ENCODE measurements at regions of chr20 and their contacts with region 1.

Region 1: GRCh38 chr20:48828022-48828743 is 384 bp upstream of the PREX1 start:
- DNase-seq: peak; percentile 74 to 78 (median 74)
- H3K4me3 ChIP-seq: peak overlapping the region; percentile 44 to 82 (median 76)
- H3K4me3 Mint-ChIP-seq: peak overlapping the region; percentile 82 to 92
- H3K27ac ChIP-seq: peak overlapping the region in 1 of 2 donors; percentile 72
- H3K27ac Mint-ChIP-seq: peak overlapping the region; percentile 68 to 94 (median 89)
- H3K4me1 ChIP-seq: peaks cover 60 to 74% of the 10 kb centered on the region in 2 donors
- H3K4me1 Mint-ChIP-seq: peaks cover 69% of the 10 kb centered on the region
- H3K27me3 ChIP-seq: no peaks in the 10 kb centered on the region
- H3K27me3 Mint-ChIP-seq: no peaks in the 10 kb centered on the region
- CTCF ChIP-seq: peak; percentile 7

Region 2: GRCh38 chr20:48722737-48723191 is 105.4 kb before region 1 on chr20:
- intact Hi-C with region 1: loop called in 1 of 2 experiments (anchors 10 kb)
- DNase-seq: peak; percentile 41 to 83 (median 68)
- H3K4me3 ChIP-seq: peak overlapping the region in 1 of 3 experiments; percentile 56
- H3K4me3 Mint-ChIP-seq: peak overlapping the region; percentile 53 to 80
- H3K27ac ChIP-seq: peak overlapping the region; percentile 91 to 98
- H3K27ac Mint-ChIP-seq: peak overlapping the region; percentile 96 to 99 (median 98)
- H3K4me1 ChIP-seq: peaks cover 79 to 88% of the 10 kb centered on the region in 2 donors
- H3K4me1 Mint-ChIP-seq: peaks cover 91% of the 10 kb centered on the region
- H3K27me3 ChIP-seq: no peaks in the 10 kb centered on the region
- H3K27me3 Mint-ChIP-seq: peaks cover 0 to 4% (median 2%) of the 10 kb centered on the region in 3 donors
- CTCF ChIP-seq: no peak

Region 3: GRCh38 chr20:48738399-48739304 is 89.5 kb before region 1 on chr20:
- intact Hi-C with region 1: no loop called
- DNase-seq: peak; percentile 47 to 76 (median 53)
- H3K4me3 ChIP-seq: no peak overlapping the region
- H3K4me3 Mint-ChIP-seq: peak overlapping the region; percentile 16 to 26
- H3K27ac ChIP-seq: peak overlapping the region; percentile 26 to 74
- H3K27ac Mint-ChIP-seq: peak overlapping the region; percentile 38 to 95 (median 71)
- H3K4me1 ChIP-seq: peaks cover 28 to 29% of the 10 kb centered on the region in 2 donors
- H3K4me1 Mint-ChIP-seq: peaks cover 48% of the 10 kb centered on the region
- H3K27me3 ChIP-seq: no peaks in the 10 kb centered on the region
- H3K27me3 Mint-ChIP-seq: peaks cover 0 to 2% (median 0%) of the 10 kb centered on the region in 3 donors
- CTCF ChIP-seq: no peak

Region 4: GRCh38 chr20:48787861-48788375 is 40.3 kb before region 1 on chr20:
- intact Hi-C with region 1: loop called (anchors 5 kb)
- DNase-seq: peak; percentile 71 to 90 (median 86)
- H3K4me3 ChIP-seq: peak overlapping the region in 1 of 3 experiments; percentile 64
- H3K4me3 Mint-ChIP-seq: peak overlapping the region; percentile 45 to 81
- H3K27ac ChIP-seq: peak overlapping the region; percentile 78 to 96
- H3K27ac Mint-ChIP-seq: peak overlapping the region; percentile 95 to 99 (median 98)
- H3K4me1 ChIP-seq: peaks cover 83 to 91% of the 10 kb centered on the region in 2 donors
- H3K4me1 Mint-ChIP-seq: peaks cover 83% of the 10 kb centered on the region
- H3K27me3 ChIP-seq: no peaks in the 10 kb centered on the region
- H3K27me3 Mint-ChIP-seq: peaks cover 0 to 5% (median 2%) of the 10 kb centered on the region in 3 donors
- CTCF ChIP-seq: no peak

Region 5: GRCh38 chr20:48864791-48865314 is 36.7 kb after region 1 on chr20:
- intact Hi-C with region 1: loop called in 1 of 2 experiments (anchors 5 kb)
- DNase-seq: no peak
- H3K4me3 ChIP-seq: no peak overlapping the region
- H3K4me3 Mint-ChIP-seq: no peak overlapping the region
- H3K27ac ChIP-seq: no peak overlapping the region
- H3K27ac Mint-ChIP-seq: peak overlapping the region in 1 of 7 donors; percentile 53
- H3K4me1 ChIP-seq: peaks cover 42 to 47% of the 10 kb centered on the region in 2 donors
- H3K4me1 Mint-ChIP-seq: peaks cover 64% of the 10 kb centered on the region
- H3K27me3 ChIP-seq: no peaks in the 10 kb centered on the region
- H3K27me3 Mint-ChIP-seq: peaks cover 0 to 2% (median 0%) of the 10 kb centered on the region in 3 donors
- CTCF ChIP-seq: no peak

Region 6: DNA sequence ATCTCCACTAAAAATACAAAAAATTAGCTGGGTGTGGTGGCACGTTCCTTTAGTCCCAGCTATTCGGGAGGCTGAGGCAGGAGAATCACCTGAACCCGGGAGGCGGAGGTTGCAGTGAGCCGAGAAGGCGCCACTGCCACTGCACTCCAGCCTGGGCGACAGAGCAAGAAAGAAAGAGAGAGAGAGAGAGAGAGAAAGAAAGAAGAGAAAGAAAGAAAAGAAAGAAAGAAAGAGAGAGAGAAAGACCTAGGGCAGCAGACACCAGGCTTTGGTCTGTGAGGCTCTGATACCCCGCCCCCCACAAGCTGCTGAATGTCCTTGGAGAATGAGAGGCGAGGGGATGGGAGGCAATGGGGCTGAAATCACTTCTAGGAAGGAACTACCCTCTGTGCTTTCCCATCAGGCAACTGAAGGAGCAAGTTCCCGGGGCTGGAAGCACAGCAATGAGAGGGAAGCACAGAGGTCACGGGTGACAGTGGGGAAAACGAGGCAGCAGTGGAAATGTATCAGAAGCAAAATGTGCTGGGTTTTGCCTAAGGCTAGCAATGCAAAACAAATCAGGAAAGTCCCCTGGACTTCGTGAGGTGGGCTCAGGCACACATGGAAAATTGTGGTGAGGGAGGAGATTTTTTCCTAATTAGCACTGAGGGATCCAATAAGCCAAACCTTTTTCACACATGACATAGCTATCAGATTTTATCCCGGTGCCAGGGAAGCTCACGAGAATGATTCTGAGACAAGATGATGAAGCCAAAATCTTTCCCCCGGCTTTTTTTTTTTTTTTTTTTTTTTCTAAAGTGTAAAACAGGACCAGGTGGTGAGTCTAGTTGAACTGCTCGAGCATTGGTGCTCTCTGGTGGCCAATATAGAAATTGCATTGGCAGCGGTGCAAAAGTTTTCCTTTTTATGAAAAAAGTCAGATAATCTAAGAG is 76.4 kb after region 1 on chr20:
- intact Hi-C with region 1: loop called (anchors 2 to 5 kb)
- DNase-seq: peak; percentile 54 to 73 (median 63)
- H3K4me3 ChIP-seq: no peak overlapping the region
- H3K4me3 Mint-ChIP-seq: no peak overlapping the region
- H3K27ac ChIP-seq: no peak overlapping the region
- H3K27ac Mint-ChIP-seq: peak overlapping the region in 3 of 7 donors; percentile 46 to 74 (median 70)
- H3K4me1 ChIP-seq: peaks cover 47 to 61% of the 10 kb centered on the region in 2 donors
- H3K4me1 Mint-ChIP-seq: peaks cover 66% of the 10 kb centered on the region
- H3K27me3 ChIP-seq: no peaks in the 10 kb centered on the region
- H3K27me3 Mint-ChIP-seq: peaks cover 0 to 4% (median 4%) of the 10 kb centered on the region in 3 donors
- CTCF ChIP-seq: peak; percentile 83

Measured in CD14-positive monocyte (primary cell).